Activated CD8-positive, alpha-beta T cell treated with anti-CD3 and anti-CD28 coated beads, Interleukin-2, amount 10 ng/mL, durations not matched to agents 7 days and 5 days (primary cell): ENCODE measurements at regions of chr12 and their contacts with region 1.

Region 1: DNA sequence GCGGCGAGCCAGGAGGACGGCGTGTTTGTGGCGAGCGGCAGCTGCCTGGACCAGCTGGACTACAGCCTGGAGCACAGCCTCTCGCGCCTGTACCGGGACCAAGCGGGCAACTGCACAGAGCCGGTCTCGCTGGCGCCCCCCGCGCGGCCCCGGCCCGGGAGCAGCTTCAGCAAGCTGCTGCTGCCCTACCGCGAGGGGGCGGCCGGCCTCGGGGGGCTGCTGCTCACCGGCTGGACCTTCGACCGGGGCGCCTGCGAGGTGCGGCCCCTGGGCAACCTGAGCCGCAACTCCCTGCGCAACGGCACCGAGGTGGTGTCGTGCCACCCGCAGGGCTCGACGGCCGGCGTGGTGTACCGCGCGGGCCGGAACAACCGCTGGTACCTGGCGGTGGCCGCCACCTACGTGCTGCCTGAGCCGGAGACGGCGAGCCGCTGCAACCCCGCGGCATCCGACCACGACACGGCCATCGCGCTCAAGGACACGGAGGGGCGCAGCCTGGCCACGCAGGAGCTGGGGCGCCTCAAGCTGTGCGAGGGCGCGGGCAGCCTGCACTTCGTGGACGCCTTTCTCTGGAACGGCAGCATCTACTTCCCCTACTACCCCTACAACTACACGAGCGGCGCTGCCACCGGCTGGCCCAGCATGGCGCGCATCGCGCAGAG is 873 bp downstream of the PLXNC1 start:
- DNase-seq: peak; percentile 67
- ATAC-seq: peak; percentile 42
- H3K4me3 Mint-ChIP-seq: peak overlapping the region; percentile 95
- H3K27ac Mint-ChIP-seq: peak overlapping the region; percentile 72
- H3K4me1 Mint-ChIP-seq: peaks cover 58% of the 10 kb centered on the region
- H3K27me3 Mint-ChIP-seq: peaks cover 22% of the 10 kb centered on the region

Region 2: DNA sequence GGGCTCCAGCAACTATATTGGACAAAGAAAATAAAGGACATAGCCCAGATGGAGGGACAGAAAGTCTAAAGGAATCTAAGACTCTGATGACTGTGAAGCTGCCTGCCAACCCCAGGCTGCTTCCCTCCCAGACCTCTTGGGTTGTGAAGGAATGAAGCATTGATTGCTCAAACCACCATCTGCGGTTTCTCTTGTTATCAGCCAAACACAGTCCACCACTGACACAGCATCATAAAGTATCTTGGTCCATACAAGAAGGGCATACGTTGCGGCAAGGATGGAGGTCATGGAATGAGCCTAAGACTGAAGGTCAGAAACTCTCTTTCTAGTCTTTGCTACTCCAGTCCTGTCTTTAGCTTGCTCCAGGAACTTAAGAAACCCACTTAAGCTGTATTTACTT is 59.4 kb before region 1 on chr12:
- CTCF ChIA-PET with region 1: no interaction called
- POLR2A ChIA-PET with region 1: no interaction called
- DNase-seq: no peak
- ATAC-seq: no peak
- H3K4me3 Mint-ChIP-seq: no peak overlapping the region
- H3K27ac Mint-ChIP-seq: no peak overlapping the region
- H3K4me1 Mint-ChIP-seq: no peaks in the 10 kb centered on the region
- H3K27me3 Mint-ChIP-seq: peaks cover 2% of the 10 kb centered on the region

Region 3: GRCh38 chr12:94133964-94134795 is 15.1 kb before region 1 on chr12:
- CTCF ChIA-PET with region 1: interaction called, 22 read pairs
- POLR2A ChIA-PET with region 1: no interaction called
- DNase-seq: peak; percentile 64
- ATAC-seq: peak; percentile 93
- H3K4me3 Mint-ChIP-seq: no peak overlapping the region
- H3K27ac Mint-ChIP-seq: no peak overlapping the region
- H3K4me1 Mint-ChIP-seq: peaks cover 14% of the 10 kb centered on the region
- H3K27me3 Mint-ChIP-seq: peaks cover 6% of the 10 kb centered on the region

Region 4: DNA sequence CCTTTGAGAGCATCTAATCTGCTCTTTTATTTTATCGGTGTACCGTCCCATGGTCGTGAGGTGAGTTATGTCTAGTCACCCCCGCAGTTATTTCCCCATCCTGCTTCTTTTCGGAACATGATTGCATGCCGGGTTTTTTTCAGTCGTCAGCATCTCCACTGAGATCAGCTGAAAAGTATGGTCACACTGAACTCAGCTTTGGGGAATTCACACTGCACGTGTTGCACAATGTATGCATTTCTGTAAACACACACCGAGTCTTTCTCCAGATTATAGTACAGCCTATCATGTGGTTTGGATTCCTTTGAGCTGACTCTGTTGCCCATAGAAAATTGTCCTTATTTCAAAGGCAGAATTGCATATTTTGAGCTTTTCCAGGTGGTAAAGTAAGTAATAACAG is 23.7 kb after region 1 on chr12:
- CTCF ChIA-PET with region 1: interaction called, 15 read pairs
- POLR2A ChIA-PET with region 1: interaction called, 6 read pairs
- DNase-seq: no peak
- ATAC-seq: no peak
- H3K4me3 Mint-ChIP-seq: no peak overlapping the region
- H3K27ac Mint-ChIP-seq: no peak overlapping the region
- H3K4me1 Mint-ChIP-seq: peaks cover 67% of the 10 kb centered on the region
- H3K27me3 Mint-ChIP-seq: no peaks in the 10 kb centered on the region

Region 5: DNA sequence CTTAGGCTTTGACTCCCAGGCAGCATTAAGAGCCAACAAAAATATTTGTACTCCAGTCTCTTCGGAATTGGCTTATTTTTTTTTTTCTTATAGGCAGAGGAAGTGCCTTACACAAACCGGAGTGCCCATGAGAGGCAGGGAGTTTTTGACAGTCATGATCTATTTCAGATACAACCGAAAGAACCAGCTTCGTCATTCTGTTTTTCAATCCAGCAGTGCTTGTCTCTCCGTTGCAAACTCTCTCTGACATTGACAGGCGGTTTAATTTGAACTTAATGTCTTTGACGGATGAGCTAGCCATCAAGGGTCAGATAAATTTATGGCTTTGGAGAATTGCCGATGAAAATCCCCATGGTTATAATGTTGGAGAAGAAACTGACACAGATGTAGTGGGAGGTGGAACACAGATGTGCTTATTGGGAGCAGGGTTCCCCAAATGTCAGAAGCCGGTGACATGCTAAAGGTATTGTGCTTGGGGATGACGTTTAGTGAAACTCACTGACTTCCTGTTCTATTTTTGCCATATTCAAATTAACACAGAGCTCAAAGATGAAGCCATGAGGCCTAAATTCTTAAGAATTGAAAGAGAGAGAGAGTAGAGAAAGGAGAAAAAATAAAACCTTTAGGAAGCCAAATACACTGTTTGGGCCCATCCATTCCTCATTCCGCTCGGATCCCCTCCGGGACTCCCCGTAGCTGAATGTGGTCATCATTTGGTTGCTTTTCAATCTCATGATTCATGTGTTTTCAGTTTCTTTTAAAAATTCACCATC is 58.8 kb after region 1 on chr12:
- CTCF ChIA-PET with region 1: interaction called, 29 read pairs
- POLR2A ChIA-PET with region 1: interaction called, 13 read pairs
- DNase-seq: peak; percentile 51
- ATAC-seq: peak; percentile 77
- H3K4me3 Mint-ChIP-seq: peak overlapping the region; percentile 77
- H3K27ac Mint-ChIP-seq: peak overlapping the region; percentile 97
- H3K4me1 Mint-ChIP-seq: peaks cover 69% of the 10 kb centered on the region
- H3K27me3 Mint-ChIP-seq: no peaks in the 10 kb centered on the region

Region 6: GRCh38 chr12:94262228-94263010 is 113.2 kb after region 1 on chr12:
- CTCF ChIA-PET with region 1: interaction called, 11 read pairs
- POLR2A ChIA-PET with region 1: interaction called, 10 read pairs
- DNase-seq: peak; percentile 81
- ATAC-seq: peak; percentile 90
- H3K4me3 Mint-ChIP-seq: peak overlapping the region; percentile 83
- H3K27ac Mint-ChIP-seq: peak overlapping the region; percentile 95
- H3K4me1 Mint-ChIP-seq: peaks cover 58% of the 10 kb centered on the region
- H3K27me3 Mint-ChIP-seq: no peaks in the 10 kb centered on the region

Region 7: DNA sequence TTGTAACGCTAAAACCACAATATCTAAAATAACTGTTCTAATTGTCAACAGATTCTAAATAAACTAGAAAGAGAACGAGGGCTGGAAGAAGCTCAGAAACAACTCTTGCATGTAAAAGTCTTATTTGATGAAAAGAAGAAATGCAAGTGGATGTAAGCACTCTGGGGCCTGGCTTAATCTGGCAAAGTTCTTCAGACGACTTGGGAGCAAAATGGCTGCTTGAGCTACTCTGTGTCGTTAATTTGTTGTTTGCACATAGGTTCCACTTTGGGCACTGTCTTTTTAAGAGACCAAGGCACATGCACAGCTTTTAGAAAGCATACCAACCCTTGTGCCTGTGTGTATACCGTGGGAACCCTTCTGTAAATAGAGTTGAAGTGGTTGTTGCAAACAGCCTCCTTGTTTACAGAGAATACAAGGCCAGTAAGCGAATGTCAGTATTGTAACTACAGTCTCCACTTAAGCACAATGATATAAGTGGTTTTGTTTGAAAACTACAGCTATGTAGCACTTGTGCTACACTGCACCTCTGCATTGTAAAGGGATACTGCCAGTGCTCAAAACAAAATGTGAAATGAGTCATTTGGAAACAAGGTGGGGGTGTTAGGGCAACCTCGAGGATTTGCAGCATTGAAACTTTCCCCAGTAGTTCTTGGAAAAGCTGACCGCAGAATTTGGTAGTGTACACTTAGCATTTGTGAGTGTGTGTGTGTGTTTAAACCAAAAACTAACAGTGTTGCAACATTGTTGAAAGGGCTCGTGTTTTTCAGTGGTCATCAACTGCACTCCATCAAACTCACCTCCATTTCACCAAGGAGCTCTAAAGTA is 156.1 kb after region 1 on chr12:
- CTCF ChIA-PET with region 1: interaction called, 13 read pairs
- POLR2A ChIA-PET with region 1: no interaction called
- DNase-seq: peak; percentile 79
- ATAC-seq: peak; percentile 93
- H3K4me3 Mint-ChIP-seq: peak overlapping the region; percentile 12
- H3K27ac Mint-ChIP-seq: peak overlapping the region; percentile 71
- H3K4me1 Mint-ChIP-seq: peaks cover 42% of the 10 kb centered on the region
- H3K27me3 Mint-ChIP-seq: no peaks in the 10 kb centered on the region